ENCODE measurements at regions of chr21 and their contacts with region 1.

Region 1: DNA sequence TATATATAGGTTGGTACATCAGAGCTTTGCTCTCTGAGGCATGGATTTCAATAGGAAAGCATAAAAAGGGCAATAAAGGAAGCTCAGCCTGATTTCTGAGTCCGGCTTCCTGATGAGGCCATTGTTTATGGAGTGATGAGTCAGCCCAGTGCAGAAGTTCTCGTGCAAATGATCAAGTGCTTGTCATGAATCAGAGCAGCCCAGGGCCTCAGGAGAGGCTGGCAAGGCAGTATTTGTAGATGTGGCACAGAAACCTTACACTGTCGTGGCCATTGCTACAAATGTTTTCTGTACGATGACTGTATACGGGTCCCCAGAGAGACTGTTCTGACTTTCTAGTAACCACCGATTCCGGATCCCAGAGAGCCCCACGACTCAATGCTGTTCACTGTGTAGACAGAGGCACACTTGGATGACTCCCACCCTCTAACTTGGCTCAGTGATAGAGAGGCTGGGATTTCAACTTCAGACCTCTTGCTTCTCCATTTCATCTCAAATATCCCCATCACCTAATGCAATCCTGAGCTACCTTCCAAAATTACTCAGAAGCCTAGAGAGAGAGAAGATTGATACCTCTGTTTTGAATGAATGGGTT is 26.8 kb downstream of the UMODL1 start:
- H3K4me3 ChIP-seq: no peak overlapping the region
- H3K27ac ChIP-seq: peak overlapping the region; percentile 1; the same call in 1 of the 2 replicates
- H3K4me1 ChIP-seq: peaks cover 11% of the 10 kb centered on the region
- CTCF ChIP-seq: no peak

Region 2: DNA sequence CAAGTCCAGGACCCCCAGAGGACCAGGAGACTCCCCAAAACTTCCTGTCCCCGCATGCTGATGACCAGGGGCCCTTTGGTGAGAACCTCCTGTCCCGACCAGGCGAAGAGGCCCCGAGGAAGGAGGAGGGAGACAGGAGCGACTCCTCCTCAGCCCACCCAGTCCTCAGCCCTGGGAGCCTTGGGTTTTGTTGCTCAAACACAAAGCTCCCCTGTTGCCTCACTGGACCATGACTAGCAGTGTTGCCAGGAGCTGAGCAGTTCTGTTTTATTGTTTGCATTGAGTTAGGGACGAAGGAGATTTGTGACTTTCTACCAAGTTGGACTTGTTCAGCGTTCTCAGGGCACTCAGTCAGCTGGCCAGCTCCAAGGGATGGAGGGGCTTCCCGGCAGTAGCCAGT is 16.8 kb before region 1 on chr21:
- CTCF ChIA-PET with region 1: no interaction called
- POLR2A ChIA-PET with region 1: no interaction called
- H3K4me3 ChIP-seq: no peak overlapping the region
- H3K27ac ChIP-seq: no peak overlapping the region
- H3K4me1 ChIP-seq: no peaks in the 10 kb centered on the region
- CTCF ChIP-seq: no peak

Region 3: DNA sequence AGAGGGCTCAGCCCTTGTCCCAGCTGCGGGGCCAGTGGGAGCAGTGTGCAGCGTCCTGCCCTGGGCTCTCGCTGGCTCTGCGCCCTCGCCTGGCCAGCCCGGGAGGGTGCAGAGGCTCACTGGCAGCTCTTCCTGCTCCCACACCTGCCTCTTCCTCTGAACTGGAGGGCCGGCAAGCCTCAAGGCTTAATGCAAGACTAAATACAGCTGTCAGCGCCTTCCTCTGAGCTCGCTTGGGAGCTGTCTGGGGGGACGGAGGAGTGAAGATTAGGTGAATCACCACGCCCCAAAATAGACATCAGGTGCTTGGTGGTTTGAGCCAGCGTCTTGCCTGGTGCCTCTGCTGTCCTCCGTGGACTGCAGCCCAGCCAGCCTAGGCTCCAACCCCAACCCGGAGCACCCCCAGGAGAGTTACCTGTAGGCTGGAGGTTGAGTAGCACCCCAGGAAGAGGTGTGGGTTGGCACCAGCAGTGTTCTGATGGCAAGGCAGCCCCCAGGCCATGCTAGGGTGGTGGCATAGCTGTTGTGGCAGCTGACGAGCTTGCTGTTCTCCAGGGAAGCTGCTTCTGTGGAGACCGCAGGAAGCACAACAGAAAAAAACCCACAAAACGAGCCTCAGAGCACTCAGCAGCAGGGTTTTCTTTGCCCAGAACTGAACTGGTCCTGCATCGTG is 10.1 kb after region 1 on chr21:
- CTCF ChIA-PET with region 1: interaction called, 42 read pairs
- POLR2A ChIA-PET with region 1: no interaction called
- H3K4me3 ChIP-seq: no peak overlapping the region
- H3K27ac ChIP-seq: no peak overlapping the region
- H3K4me1 ChIP-seq: no peaks in the 10 kb centered on the region
- CTCF ChIP-seq: peak; percentile 87

Region 4: DNA sequence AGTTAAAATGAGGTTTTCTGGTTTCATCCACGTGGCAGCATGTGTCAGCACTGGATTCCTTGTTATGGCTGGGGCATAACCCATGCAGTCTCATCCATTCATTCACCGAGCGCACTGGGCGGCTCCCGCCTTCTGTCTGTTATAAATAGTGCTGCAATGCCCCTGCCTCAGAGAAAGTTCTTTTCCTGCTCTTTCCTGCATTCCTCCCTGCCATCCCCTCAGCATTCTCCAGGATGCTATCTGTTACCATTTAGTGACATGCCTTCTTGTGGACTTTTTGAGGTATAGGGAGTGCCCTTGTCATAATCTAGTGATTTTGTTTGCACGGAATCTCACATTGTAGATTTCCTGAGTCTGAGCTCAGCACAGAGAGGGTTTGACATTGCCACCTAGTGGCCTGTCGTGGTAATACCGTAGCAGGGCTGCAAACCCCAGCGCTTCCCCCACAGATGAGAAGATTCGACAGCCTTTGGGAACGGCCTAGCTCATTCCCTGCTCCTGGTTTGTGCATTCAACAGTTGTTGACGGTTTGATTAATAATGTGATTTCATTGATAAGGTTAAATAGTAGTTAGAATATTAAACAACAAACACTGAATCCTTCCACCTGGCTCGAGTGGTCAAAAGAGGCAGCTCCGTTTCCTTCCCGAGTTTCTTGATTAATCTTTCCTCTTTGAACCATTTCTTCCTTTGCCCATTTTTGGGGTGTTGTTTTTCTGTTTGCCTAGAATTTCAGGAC is 19.4 kb after region 1 on chr21:
- CTCF ChIA-PET with region 1: interaction called, 10 read pairs
- POLR2A ChIA-PET with region 1: no interaction called
- H3K4me3 ChIP-seq: no peak overlapping the region
- H3K27ac ChIP-seq: no peak overlapping the region
- H3K4me1 ChIP-seq: no peaks in the 10 kb centered on the region
- CTCF ChIP-seq: peak; percentile 82; the same call in 1 of the 2 replicates

Measured in HEK293 (cell line).